GM12878 (cell line): ENCODE measurements at regions of chr11 and their contacts with region 1.

Region 1: GRCh38 chr11:125376117-125376516 is 119.9 kb downstream of the FEZ1 start:
- DNase-seq: no peak
- ATAC-seq: peak; percentile 45
- H3K4me3 ChIP-seq: no peak overlapping the region
- H3K27ac ChIP-seq: no peak overlapping the region
- H3K4me1 ChIP-seq: no peaks in the 10 kb centered on the region
- H3K27me3 ChIP-seq: peaks cover 0 to 1% of the 10 kb centered on the region in 2 experiments; a peak in 3 of 4 replicates
- CTCF ChIP-seq: no peak
- EP300 ChIP-seq: no peak
- POLR2A ChIP-seq: no peak
- RAD21 ChIP-seq: no peak

Region 2: GRCh38 chr11:125358254-125358840 is 17.8 kb before region 1 on chr11:
- CTCF ChIA-PET with region 1: interaction called, 108 read pairs
- POLR2A ChIA-PET with region 1: interaction called, 121 read pairs
- RAD21 ChIA-PET with region 1: interaction called, 343 read pairs
- SMC1A ChIA-PET with region 1: interaction called, 250 read pairs
- in situ Hi-C with region 1: no loop called
- intact Hi-C with region 1: no loop called
- DNase-seq: no peak
- ATAC-seq: peak; percentile 23; the same call in 2 of the 3 replicates
- H3K4me3 ChIP-seq: no peak overlapping the region
- H3K27ac ChIP-seq: no peak overlapping the region
- H3K4me1 ChIP-seq: no peaks in the 10 kb centered on the region; the same call in 1 of the 2 replicates
- H3K27me3 ChIP-seq: peaks cover 0 to 1% of the 10 kb centered on the region in 2 experiments; a peak in 2 of 4 replicates
- CTCF ChIP-seq: no peak
- EP300 ChIP-seq: no peak
- POLR2A ChIP-seq: no peak
- RAD21 ChIP-seq: no peak

Region 3: DNA sequence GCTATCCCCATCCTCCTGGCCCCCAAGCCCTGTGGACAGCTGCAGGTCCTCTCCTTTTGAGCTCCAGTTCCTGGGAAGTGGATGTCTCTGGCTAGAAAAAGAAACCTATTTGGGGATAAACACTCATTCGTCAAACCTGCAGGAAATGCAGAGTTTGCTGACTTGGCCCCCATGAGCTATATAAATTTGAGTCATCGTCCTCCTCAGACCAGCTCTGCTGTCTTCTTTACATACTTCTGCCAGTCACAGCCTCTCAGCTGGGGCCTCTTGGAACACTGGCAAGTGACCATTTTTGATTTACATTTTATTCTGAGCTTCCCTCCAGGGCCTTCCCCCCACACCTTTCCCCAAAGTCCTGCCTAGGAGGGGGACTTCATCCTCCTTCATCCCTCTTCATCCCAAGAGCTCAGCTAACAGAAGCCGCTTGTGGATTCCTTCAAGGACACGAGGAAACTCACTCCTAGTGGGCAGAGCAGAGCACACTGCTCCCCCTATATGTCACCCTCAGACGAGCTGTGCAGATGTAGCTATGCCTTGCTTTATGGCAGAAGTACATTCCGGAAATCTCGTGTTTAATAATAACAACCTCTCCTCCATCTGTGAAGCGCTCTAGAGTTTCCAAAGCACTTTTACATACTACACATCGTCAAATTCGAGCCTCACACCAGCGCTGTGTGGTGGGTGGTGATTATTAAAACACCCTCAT is 11.8 kb before region 1 on chr11:
- CTCF ChIA-PET with region 1: interaction called, 108 read pairs
- POLR2A ChIA-PET with region 1: interaction called, 121 read pairs
- RAD21 ChIA-PET with region 1: interaction called, 343 read pairs
- SMC1A ChIA-PET with region 1: interaction called, 250 read pairs
- in situ Hi-C with region 1: no loop called
- intact Hi-C with region 1: no loop called
- DNase-seq: no peak
- ATAC-seq: peak; percentile 36; the same call in 2 of the 3 replicates
- H3K4me3 ChIP-seq: no peak overlapping the region
- H3K27ac ChIP-seq: no peak overlapping the region
- H3K4me1 ChIP-seq: no peaks in the 10 kb centered on the region
- H3K27me3 ChIP-seq: peaks cover 2% of the 10 kb centered on the region in 2 experiments; a peak in 2 of 4 replicates
- CTCF ChIP-seq: no peak
- EP300 ChIP-seq: no peak
- POLR2A ChIP-seq: no peak
- RAD21 ChIP-seq: no peak

Region 4: GRCh38 chr11:125393331-125393730 is 17.2 kb after region 1 on chr11:
- CTCF ChIA-PET with region 1: interaction called, 24 read pairs
- POLR2A ChIA-PET with region 1: interaction called, 20 read pairs
- RAD21 ChIA-PET with region 1: interaction called, 37 read pairs
- SMC1A ChIA-PET with region 1: interaction called, 33 read pairs
- in situ Hi-C with region 1: no loop called
- intact Hi-C with region 1: no loop called
- DNase-seq: no peak
- ATAC-seq: peak; percentile 55
- H3K4me3 ChIP-seq: no peak overlapping the region
- H3K27ac ChIP-seq: no peak overlapping the region
- H3K4me1 ChIP-seq: no peaks in the 10 kb centered on the region; the same call in 1 of the 2 replicates
- H3K27me3 ChIP-seq: peaks cover 1 to 3% of the 10 kb centered on the region in 2 experiments; a peak in 3 of 4 replicates
- CTCF ChIP-seq: peak in 2 of 3 experiments; percentile 29 to 30; a peak in 4 of 6 replicates
- EP300 ChIP-seq: no peak
- POLR2A ChIP-seq: no peak
- RAD21 ChIP-seq: no peak

Region 5: GRCh38 chr11:125398994-125399640 is 23.0 kb after region 1 on chr11:
- CTCF ChIA-PET with region 1: interaction called, 26 read pairs
- POLR2A ChIA-PET with region 1: interaction called, 20 read pairs
- RAD21 ChIA-PET with region 1: interaction called, 37 read pairs
- SMC1A ChIA-PET with region 1: interaction called, 52 read pairs
- in situ Hi-C with region 1: no loop called
- intact Hi-C with region 1: loop called (anchors 2 kb)
- DNase-seq: no peak
- ATAC-seq: peak; percentile 74
- H3K4me3 ChIP-seq: no peak overlapping the region
- H3K27ac ChIP-seq: no peak overlapping the region
- H3K4me1 ChIP-seq: no peaks in the 10 kb centered on the region; the same call in 1 of the 2 replicates
- H3K27me3 ChIP-seq: peaks cover 10 to 14% of the 10 kb centered on the region in 2 experiments
- CTCF ChIP-seq: no peak
- EP300 ChIP-seq: no peak
- POLR2A ChIP-seq: no peak
- RAD21 ChIP-seq: no peak